ENCODE measurements at regions of chr6 and their contacts with region 1.

Region 1: DNA sequence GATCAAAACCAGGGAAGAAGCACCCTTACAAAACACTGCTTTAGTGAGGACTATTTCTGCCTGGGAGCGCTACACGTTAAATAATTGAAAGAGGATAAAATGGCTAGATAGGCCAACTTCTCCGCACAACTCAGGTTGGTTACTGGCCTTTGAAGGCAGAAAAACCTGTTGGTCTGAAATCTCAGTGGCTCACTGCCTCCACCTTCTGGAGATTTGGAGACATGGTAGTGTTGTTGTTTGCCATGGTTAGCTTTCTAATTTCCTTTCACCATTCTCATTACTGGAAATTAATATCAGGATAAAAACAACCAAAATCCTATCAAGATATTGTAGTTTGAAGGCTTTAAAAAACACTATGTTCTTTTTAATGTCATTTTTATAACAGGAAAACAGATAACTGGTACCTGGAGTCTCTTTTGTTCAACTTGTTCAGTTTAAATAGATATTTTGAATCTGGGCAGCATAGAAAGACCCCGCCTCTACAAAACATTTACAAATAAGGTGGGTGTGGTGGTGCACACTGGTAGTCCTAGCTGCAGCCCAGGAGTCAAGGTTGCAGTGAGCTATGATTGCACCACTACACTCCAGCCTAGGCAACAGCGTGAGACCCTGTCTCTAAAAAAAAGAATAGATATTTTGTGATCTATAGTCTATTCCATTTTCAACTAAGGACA is 27.5 kb upstream of the BCLAF1 start:
- DNase-seq: peak; percentile 75
- ATAC-seq: peak; percentile 88
- H3K4me3 Mint-ChIP-seq: no peak overlapping the region
- H3K27ac Mint-ChIP-seq: no peak overlapping the region
- H3K4me1 Mint-ChIP-seq: no peaks in the 10 kb centered on the region
- H3K27me3 Mint-ChIP-seq: no peaks in the 10 kb centered on the region

Region 2: DNA sequence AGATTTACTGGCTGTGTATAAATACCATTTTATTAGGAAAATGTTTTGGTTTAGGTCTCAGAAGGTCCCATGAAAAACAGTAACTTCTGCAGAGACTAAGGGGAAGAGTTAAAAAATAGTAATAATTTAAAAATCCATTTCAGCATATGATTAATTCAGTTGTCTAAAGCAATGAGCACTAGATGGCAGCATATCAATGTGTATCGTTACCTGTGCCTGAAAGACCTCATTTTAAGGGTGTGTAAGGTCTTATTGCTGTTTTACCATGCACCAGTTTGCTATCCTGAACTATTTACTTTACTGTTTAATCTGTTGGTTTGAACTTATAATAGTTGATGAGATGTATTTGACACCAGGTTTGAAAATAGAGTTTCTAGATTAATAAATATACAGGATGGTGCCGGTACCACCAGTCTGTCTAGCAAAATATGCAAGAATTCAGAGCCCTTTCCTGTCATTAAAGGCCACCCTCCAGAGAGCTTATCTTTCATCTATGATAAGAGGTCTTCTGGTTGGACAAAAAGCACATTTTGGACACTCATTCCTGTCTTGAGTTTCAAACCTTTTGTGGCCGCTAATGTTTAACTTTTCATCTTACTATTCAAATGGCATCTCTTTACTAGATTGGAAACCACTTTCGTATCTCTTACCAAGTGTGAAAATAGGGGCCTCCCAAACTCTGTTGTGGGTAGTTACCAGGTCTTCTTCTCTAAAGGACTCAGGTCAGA is 810.7 kb before region 1 on chr6:
- CTCF ChIA-PET with region 1: interaction called, 3 read pairs
- POLR2A ChIA-PET with region 1: no interaction called
- intact Hi-C with region 1: loop called (anchors 1 to 5 kb)
- DNase-seq: no peak
- ATAC-seq: peak; percentile 81
- H3K4me3 Mint-ChIP-seq: no peak overlapping the region
- H3K27ac Mint-ChIP-seq: no peak overlapping the region
- H3K4me1 Mint-ChIP-seq: peaks cover 5% of the 10 kb centered on the region
- H3K27me3 Mint-ChIP-seq: no peaks in the 10 kb centered on the region

Region 3: GRCh38 chr6:135675862-135676261 is 641.3 kb before region 1 on chr6:
- CTCF ChIA-PET with region 1: interaction called, 3 read pairs
- POLR2A ChIA-PET with region 1: no interaction called
- intact Hi-C with region 1: loop called (anchors 5 kb)
- DNase-seq: peak; percentile 51
- ATAC-seq: peak; percentile 82
- H3K4me3 Mint-ChIP-seq: no peak overlapping the region
- H3K27ac Mint-ChIP-seq: no peak overlapping the region
- H3K4me1 Mint-ChIP-seq: peaks cover 19% of the 10 kb centered on the region
- H3K27me3 Mint-ChIP-seq: no peaks in the 10 kb centered on the region

Region 4: GRCh38 chr6:136103763-136104311 is 213.3 kb before region 1 on chr6:
- CTCF ChIA-PET with region 1: no interaction called
- POLR2A ChIA-PET with region 1: no interaction called
- intact Hi-C with region 1: no loop called
- DNase-seq: no peak
- ATAC-seq: no peak
- H3K4me3 Mint-ChIP-seq: no peak overlapping the region
- H3K27ac Mint-ChIP-seq: no peak overlapping the region
- H3K4me1 Mint-ChIP-seq: no peaks in the 10 kb centered on the region
- H3K27me3 Mint-ChIP-seq: peaks cover 2% of the 10 kb centered on the region

Region 5: GRCh38 chr6:136249811-136250685 is 67.1 kb before region 1 on chr6 and contains the start of gene MTFR2:
- CTCF ChIA-PET with region 1: interaction called, 7 read pairs
- POLR2A ChIA-PET with region 1: no interaction called
- intact Hi-C with region 1: loop called (anchors 1 kb)
- DNase-seq: peak; percentile 95
- ATAC-seq: peak; percentile 94
- H3K4me3 Mint-ChIP-seq: peak within 1 kb of the TSS; percentile 98
- H3K27ac Mint-ChIP-seq: peak within 1 kb of the TSS; percentile 90
- H3K4me1 Mint-ChIP-seq: peaks cover 42% of the 10 kb centered on the region
- H3K27me3 Mint-ChIP-seq: no peaks in the 10 kb centered on the region
- total RNA-seq, gene MTFR2: 26.9 to 28.9 TPM

Region 6: DNA sequence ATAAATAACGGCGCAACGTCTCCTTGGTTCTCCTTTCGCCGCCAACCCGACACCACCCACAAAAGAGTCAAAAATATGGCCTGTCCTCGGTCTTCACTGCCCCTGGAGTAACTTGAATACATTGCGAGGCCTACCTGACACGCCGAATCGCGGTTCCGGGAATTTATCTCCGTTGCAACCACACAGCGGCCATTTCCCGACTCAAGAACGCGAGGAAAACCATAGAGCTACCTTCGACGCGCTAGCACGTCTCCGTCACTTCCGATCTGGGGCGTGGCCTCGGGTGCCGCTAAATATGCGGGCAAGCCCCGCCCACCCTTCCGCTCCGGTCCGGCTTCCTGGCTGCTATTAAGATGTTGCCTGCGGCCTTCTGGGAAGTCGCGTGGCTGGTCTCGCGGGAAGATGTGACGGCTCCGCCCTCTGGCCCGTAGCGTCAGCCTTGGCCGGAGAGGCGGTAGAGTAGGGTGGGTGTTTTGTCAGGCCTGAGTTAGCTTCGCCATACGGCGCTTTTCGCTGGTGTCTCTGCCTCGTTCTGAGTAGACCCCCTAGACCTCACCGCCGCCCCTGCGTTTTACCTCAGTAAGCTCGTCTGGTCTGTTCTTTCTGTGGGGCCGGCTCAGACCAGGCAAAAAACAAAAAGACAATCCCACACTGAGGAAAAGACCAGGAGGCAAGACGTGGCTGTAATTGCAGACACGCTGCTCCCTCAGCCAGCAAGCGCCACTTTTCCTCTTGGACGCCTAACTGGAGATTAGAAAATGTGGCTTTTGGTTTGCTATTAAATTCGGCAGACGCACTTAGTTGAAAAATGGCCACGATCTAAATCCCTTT is 27.4 kb before region 1 on chr6 and contains the start of gene BCLAF1:
- CTCF ChIA-PET with region 1: interaction called, 14 read pairs
- POLR2A ChIA-PET with region 1: no interaction called
- intact Hi-C with region 1: loop called (anchors 1 to 2 kb)
- DNase-seq: peak; percentile 100
- ATAC-seq: peak; percentile 83
- H3K4me3 Mint-ChIP-seq: peak within 1 kb of the TSS; percentile 100
- H3K27ac Mint-ChIP-seq: peak within 1 kb of the TSS; percentile 100
- H3K4me1 Mint-ChIP-seq: peaks cover 37% of the 10 kb centered on the region
- H3K27me3 Mint-ChIP-seq: no peaks in the 10 kb centered on the region
- total RNA-seq, gene BCLAF1: 166 to 223 TPM

Region 7: DNA sequence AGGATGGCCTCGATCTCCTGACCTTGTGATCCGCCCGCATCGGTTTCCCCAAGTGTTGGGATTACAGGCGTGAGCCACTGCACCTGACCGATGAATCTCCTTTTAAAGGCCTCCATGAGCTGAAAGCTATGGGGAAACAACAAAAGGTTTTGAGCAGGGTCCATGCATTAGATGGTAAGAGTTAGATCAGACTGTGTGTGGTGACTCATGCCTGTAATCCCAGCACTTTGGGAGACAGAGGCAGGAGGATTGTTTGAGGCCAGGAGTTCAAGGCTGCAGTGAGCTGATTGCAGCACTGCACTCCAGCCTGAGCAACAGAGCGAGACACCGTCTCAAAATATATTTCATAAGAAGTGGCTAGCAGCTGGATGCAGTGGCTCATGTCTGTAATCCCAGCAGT is 13.5 kb after region 1 on chr6:
- CTCF ChIA-PET with region 1: interaction called, 10 read pairs
- POLR2A ChIA-PET with region 1: no interaction called
- intact Hi-C with region 1: no loop called
- DNase-seq: no peak
- ATAC-seq: no peak
- H3K4me3 Mint-ChIP-seq: no peak overlapping the region
- H3K27ac Mint-ChIP-seq: no peak overlapping the region
- H3K4me1 Mint-ChIP-seq: no peaks in the 10 kb centered on the region
- H3K27me3 Mint-ChIP-seq: no peaks in the 10 kb centered on the region

Region 8: DNA sequence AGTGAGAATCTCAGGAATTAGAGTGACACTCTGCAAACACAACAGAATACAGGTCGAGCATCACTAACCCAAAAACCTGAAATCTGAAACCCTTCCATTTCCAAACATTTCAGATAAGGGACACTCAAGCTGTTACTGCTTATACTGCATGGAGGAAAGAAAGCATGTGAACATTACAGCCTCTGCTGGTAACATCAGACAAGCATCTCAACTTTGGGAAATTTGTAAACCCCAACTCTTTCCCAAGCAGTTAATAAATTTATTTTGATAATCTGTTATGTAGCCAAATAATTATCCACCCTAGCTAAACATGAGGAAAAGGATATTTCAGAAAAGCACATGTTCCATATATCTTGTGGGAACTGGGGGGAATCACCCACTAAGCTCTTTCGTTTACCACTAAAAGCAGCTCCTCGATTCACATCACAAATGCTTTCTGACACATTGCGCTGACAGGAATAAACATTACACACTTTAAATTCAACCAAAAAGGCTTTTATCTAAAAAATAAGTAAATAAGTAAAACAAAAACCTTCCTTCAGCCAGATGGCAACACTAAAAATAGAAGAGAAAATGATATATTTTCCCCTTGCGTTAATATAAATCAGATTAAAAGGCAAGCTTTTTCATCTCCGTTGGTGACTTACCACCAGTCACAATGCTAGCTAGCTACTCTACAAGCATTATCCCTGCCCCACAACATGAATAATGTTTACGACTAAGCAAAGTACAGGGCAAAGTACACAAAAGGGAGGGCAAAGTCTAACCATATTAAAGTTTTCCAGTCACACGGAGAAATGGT is 112.3 kb after region 1 on chr6:
- CTCF ChIA-PET with region 1: no interaction called
- POLR2A ChIA-PET with region 1: no interaction called
- intact Hi-C with region 1: no loop called
- DNase-seq: no peak
- ATAC-seq: no peak
- H3K4me3 Mint-ChIP-seq: no peak overlapping the region
- H3K27ac Mint-ChIP-seq: no peak overlapping the region
- H3K4me1 Mint-ChIP-seq: no peaks in the 10 kb centered on the region
- H3K27me3 Mint-ChIP-seq: no peaks in the 10 kb centered on the region